ENCODE measurements at regions of chr6 and their contacts with region 1.

Region 1: GRCh38 chr6:135183532-135184440 is 2.7 kb downstream of the MYB start:
- DNase-seq: peak; percentile 94
- H3K4me3 Mint-ChIP-seq: peak overlapping the region; percentile 92
- H3K27ac Mint-ChIP-seq: peak overlapping the region; percentile 89
- H3K4me1 Mint-ChIP-seq: peaks cover 35% of the 10 kb centered on the region
- H3K27me3 Mint-ChIP-seq: no peaks in the 10 kb centered on the region

Region 2: DNA sequence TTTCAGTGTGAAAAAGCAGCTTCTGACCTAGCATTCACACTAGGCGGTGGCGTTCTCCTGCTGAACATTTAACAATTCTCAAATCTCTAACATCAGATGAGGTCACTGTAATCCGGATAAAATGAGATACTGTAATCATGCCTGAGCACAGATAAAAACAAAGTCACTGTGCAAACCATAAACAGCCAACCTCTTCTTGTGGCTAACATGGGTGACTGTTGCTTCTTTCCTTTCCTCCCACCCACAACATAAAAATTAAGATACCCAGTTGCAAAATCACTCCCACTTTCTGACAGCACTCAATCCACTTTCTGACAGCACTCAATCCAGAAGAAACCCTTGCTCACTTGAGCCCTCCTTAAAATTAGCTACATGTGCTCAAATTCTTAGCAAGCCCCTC is 222.4 kb before region 1 on chr6:
- intact Hi-C with region 1: loop called (anchors 1 kb)
- DNase-seq: peak; percentile 53
- H3K4me3 Mint-ChIP-seq: no peak overlapping the region
- H3K27ac Mint-ChIP-seq: peak overlapping the region; percentile 31
- H3K4me1 Mint-ChIP-seq: peaks cover 17% of the 10 kb centered on the region
- H3K27me3 Mint-ChIP-seq: no peaks in the 10 kb centered on the region

Region 3: GRCh38 chr6:135030056-135030473 is 153.7 kb before region 1 on chr6:
- intact Hi-C with region 1: loop called (anchors 1 kb)
- DNase-seq: peak; percentile 76
- H3K4me3 Mint-ChIP-seq: peak overlapping the region; percentile 52
- H3K27ac Mint-ChIP-seq: peak overlapping the region; percentile 80
- H3K4me1 Mint-ChIP-seq: peaks cover 46% of the 10 kb centered on the region
- H3K27me3 Mint-ChIP-seq: no peaks in the 10 kb centered on the region

Region 4: DNA sequence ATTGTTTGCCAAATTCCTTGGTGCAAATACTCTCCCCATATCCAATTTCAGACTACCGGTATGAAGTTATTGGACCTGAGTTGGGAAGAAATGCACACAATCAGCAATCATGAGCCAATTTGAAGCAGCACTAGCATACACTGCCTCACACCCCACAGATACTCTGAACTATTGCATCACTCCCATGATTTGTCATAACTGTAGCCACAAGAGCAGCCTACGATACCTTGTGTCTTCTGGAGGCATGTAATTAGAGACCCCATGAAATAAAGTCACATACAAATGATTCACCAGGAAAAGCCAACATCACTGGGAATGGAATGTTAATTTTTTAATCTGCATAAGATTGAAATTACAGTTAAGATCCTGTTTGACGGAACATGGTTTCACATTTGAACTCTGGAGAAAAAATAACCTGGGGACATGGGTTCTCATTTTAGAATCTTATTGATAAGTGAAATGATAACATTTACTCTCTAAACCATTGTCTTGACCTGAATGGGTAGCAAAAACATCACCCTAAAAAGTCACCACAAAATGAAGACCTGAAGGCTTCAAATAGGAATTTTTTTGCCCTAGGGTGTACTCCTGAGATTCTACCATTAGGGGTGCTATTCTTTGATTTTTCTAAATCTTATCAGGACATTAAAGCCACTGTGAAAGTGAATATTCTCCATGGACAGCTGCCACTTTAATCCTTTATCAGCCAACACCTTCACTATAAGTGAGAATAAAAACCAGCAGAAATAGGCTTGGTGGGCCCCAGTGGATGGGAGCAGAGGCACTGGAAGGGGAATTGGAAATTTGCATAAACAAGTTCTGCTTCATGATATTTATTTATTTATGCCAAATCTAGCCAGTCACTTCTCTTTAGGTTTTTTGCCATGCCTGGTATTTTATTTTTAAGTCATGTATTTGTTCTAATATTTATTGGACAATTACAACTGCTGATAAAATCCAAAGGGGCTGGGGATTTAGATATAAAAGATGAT is 94.7 kb before region 1 on chr6:
- intact Hi-C with region 1: loop called (anchors 1 kb)
- DNase-seq: peak; percentile 85
- H3K4me3 Mint-ChIP-seq: peak overlapping the region; percentile 59
- H3K27ac Mint-ChIP-seq: peak overlapping the region; percentile 90
- H3K4me1 Mint-ChIP-seq: peaks cover 75% of the 10 kb centered on the region
- H3K27me3 Mint-ChIP-seq: no peaks in the 10 kb centered on the region

Region 5: DNA sequence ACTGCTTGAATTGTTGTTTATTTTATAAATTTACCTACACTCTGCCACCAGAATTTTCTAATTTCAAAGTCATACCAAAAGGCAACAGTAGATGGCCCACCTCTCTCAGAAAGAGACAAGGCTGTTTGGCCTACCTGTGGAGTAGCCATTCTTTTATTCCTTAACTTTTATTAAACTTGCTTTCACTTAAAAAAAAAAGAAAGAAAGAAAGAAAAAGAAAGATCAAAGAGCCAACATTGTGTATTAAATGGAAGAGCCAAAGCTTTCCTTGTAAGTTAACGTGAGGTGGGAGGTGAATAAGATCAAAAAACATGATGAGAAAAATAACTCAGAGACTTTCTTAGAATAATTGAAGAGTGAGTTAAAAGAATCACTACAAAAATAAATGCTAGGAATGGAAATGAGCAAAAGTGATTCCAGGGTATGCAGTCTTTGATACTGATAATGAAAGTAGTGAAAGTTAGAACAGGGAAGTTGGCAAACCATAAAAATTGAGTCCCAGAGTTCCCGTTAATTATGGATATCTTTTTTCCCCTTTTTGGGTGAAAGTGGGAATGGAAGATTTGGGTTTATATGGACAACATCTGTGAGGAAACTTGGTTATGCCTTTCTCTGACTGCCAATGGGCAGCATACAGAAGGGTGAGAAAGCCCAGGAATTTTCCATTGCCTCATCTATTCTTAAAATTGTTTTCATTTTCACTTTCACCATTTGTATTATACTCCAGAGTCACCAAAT is 38.6 kb before region 1 on chr6:
- intact Hi-C with region 1: loop called (anchors 1 kb)
- DNase-seq: peak; percentile 80
- H3K4me3 Mint-ChIP-seq: peak overlapping the region; percentile 72
- H3K27ac Mint-ChIP-seq: peak overlapping the region; percentile 86
- H3K4me1 Mint-ChIP-seq: peaks cover 54% of the 10 kb centered on the region
- H3K27me3 Mint-ChIP-seq: no peaks in the 10 kb centered on the region

Region 6: GRCh38 chr6:135170849-135171248 is 12.9 kb before region 1 on chr6:
- intact Hi-C with region 1: loop called (anchors 1 kb)
- DNase-seq: no peak
- H3K4me3 Mint-ChIP-seq: peak overlapping the region; percentile 65
- H3K27ac Mint-ChIP-seq: peak overlapping the region; percentile 94
- H3K4me1 Mint-ChIP-seq: peaks cover 22% of the 10 kb centered on the region
- H3K27me3 Mint-ChIP-seq: no peaks in the 10 kb centered on the region

Region 7: DNA sequence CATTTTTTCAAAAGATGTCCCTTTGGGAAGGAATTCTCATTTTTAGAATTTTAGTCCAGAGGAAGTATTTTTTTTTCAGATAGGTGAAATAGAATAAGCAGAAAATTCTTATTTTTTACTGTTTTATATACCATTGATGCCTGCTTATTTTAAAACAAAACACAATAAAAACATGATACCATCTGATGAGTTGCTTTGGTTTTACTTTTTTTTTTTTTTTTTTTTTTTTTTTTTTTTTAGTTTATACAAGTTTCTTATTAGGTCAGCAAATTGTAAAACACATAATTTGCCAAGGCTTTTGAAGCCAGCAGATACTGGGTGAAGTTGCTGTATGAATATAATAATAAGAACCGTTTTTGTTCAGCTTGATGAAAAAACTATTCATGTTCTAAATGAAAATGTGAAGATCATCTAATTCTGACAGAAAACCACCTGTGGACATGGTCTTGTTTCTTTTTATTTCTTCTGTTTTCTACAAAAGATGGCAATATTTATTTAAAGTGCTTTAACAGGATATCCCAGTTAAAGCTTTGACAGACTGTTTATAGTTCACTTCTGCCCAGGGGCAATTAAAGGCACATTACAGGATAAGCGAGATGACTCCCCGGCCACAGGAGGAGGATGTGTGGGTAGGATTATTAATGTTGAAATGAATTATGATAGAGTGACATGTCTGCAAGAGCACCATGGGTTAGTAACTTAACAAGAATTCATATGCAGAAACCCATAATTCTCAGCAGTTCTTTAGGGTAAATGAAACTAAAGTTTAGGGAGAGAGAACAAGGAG is 28.4 kb after region 1 on chr6:
- intact Hi-C with region 1: loop called (anchors 2 kb)
- DNase-seq: no peak
- H3K4me3 Mint-ChIP-seq: peak overlapping the region; percentile 69
- H3K27ac Mint-ChIP-seq: peak overlapping the region; percentile 84
- H3K4me1 Mint-ChIP-seq: peaks cover 40% of the 10 kb centered on the region
- H3K27me3 Mint-ChIP-seq: no peaks in the 10 kb centered on the region

Region 8: GRCh38 chr6:135226537-135226936 is 42.8 kb after region 1 on chr6:
- intact Hi-C with region 1: no loop called
- DNase-seq: no peak
- H3K4me3 Mint-ChIP-seq: no peak overlapping the region
- H3K27ac Mint-ChIP-seq: no peak overlapping the region
- H3K4me1 Mint-ChIP-seq: peaks cover 22% of the 10 kb centered on the region
- H3K27me3 Mint-ChIP-seq: no peaks in the 10 kb centered on the region

Region 9: GRCh38 chr6:135314543-135314942 is 130.8 kb after region 1 on chr6:
- intact Hi-C with region 1: no loop called
- DNase-seq: no peak
- H3K4me3 Mint-ChIP-seq: no peak overlapping the region
- H3K27ac Mint-ChIP-seq: no peak overlapping the region
- H3K4me1 Mint-ChIP-seq: peaks cover 2% of the 10 kb centered on the region
- H3K27me3 Mint-ChIP-seq: no peaks in the 10 kb centered on the region